Posterior cingulate gyrus (tissue), 11 donors: ENCODE measurements at regions of chr10 and their contacts with region 1.

Region 1: GRCh38 chr10:22003079-22003913 is at the start of gene DNAJC1:
- DNase-seq: peak; percentile 97 to 100 (median 98)

Region 2: GRCh38 chr10:21978191-21978862 is 25.0 kb before region 1 on chr10:
- intact Hi-C with region 1: no loop called
- DNase-seq: no peak

Region 3: GRCh38 chr10:22042557-22043326 is 39.4 kb after region 1 on chr10:
- intact Hi-C with region 1: no loop called
- DNase-seq: peak in 1 of 10 donors; percentile 14

Region 4: GRCh38 chr10:22228943-22229801 is 225.9 kb after region 1 on chr10:
- intact Hi-C with region 1: loop called (anchors 5 kb)
- DNase-seq: peak; percentile 79 to 97 (median 82)